Activated CD8-positive, alpha-beta T cell treated with anti-CD3 and anti-CD28 coated beads for 36 hours (primary cell): ENCODE measurements at regions of chr10 and their contacts with region 1.

Region 1: DNA sequence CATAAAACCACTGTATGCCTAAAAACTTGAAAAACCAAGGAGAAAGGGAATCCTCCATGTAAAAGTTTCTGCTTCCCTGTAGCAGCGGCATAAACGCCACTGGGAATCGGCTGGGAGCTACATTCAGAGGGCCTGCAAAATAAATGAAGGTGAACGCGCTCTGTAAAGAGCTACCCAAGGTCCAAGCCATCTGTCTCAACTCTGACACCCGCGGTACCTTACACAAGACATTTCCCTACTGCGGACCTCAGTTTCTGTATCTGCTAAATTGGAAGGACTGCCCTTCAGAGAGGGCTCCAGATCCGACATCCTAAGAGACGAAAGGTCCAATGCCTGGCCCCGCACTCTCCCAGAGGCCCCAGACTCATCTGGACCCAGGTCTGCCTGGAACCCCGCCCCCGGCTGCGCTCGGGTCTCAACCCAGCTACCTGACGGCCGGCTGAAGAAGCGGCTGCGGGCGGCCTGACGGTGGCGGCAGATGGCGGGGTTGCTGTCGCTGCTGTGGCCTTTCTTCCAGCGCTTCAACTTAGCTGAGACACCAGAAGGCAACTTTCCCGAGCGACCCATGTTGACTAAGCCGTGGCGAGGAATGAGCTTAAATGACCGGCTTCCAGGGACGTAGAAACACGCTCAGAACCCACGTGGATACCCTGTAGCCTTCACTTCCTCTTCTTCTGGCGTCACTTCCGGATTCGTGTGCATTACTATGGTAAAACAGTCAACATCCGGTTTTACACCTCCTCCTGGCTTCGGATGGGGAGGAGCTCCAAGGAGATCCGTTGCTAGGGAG is at the start of gene RRP12:
- DNase-seq: peak; percentile 93
- ATAC-seq: peak; percentile 98
- H3K4me3 Mint-ChIP-seq: peak within 1 kb of the TSS; percentile 89
- H3K27ac Mint-ChIP-seq: peak within 1 kb of the TSS; percentile 79
- H3K4me1 Mint-ChIP-seq: peaks cover 5% of the 10 kb centered on the region
- H3K27me3 Mint-ChIP-seq: no peaks in the 10 kb centered on the region
- CTCF ChIP-seq: no peak
- total RNA-seq, gene RRP12: 50.3 to 51.0 TPM

Region 2: DNA sequence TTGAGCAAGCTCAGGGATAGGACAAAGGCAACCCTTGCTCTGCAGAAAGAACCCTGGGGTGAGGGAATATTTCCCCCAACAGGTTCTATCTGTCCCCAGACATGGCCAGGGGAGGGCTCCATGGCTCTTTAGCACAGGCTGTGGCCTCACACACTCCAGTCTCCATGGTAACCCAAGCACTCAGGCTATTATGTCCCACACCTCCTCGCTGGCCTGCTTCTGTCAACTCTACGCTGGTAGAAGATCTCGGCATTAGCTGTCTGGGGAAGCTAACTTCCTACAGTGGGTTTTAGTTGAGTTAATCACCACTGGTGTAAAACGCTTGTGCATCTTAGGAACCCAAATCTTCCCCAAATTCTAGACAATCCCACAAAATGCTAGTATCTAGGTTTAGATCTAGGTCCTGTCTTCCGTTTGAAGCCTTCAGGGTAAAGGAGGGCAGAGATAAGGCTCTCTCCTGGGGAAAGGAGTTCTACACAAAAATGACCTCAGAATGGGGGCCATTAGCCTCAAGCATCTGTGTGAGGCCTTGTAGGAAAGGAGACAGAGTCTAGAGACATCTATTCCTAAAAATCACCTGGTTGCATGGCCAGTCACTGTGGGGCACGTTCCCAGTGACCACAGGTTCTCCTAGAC is 178.4 kb before region 1 on chr10:
- CTCF ChIA-PET with region 1: no interaction called
- POLR2A ChIA-PET with region 1: no interaction called
- intact Hi-C with region 1: no loop called
- DNase-seq: no peak
- ATAC-seq: no peak
- H3K4me3 Mint-ChIP-seq: no peak overlapping the region
- H3K27ac Mint-ChIP-seq: no peak overlapping the region
- H3K4me1 Mint-ChIP-seq: peaks cover 24% of the 10 kb centered on the region
- H3K27me3 Mint-ChIP-seq: no peaks in the 10 kb centered on the region
- CTCF ChIP-seq: no peak

Region 3: GRCh38 chr10:97412891-97413304 is 12.0 kb after region 1 on chr10:
- CTCF ChIA-PET with region 1: interaction called, 43 read pairs
- POLR2A ChIA-PET with region 1: interaction called, 6 read pairs
- intact Hi-C with region 1: no loop called
- DNase-seq: peak; percentile 87
- ATAC-seq: peak; percentile 60
- H3K4me3 Mint-ChIP-seq: peak overlapping the region; percentile 41
- H3K27ac Mint-ChIP-seq: peak overlapping the region; percentile 88
- H3K4me1 Mint-ChIP-seq: peaks cover 47% of the 10 kb centered on the region
- H3K27me3 Mint-ChIP-seq: no peaks in the 10 kb centered on the region
- CTCF ChIP-seq: no peak

Region 4: DNA sequence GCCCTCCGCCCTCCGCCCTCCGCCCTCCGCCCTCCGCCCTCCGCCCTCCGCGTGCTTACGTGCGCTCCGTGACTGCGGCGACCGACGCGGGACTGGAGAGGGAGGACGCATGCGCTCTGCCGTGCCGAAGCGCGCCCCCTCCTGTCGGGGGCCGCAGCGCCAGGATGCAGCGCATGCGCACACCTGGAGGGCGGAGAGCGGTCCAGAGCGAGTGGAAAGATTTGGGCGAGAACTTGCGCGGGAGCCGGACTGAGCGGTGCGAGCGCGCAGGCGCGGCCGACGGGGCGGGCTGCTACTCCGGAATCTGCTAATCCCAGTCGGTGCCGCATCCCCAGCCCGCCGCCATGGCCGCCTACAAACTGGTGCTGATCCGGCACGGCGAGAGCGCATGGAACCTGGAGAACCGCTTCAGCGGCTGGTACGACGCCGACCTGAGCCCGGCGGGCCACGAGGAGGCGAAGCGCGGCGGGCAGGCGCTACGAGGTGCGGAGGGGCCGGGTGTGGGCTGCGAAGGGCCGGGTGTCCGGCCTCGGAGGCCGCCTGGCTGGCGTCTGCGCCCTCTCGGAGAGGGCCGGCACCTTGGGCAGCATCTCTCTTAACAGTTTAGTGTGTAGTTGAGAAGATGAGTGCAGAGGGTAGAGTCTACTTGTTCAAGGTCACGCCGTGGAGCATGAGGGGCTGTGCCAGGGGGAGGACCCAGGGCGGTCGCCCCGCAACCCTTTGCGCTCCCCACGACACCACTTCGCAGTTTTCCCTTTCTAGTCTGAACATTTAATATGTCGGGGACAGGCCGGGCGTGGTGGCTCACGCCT is 25.3 kb after region 1 on chr10 and contains the start of gene PGAM1:
- CTCF ChIA-PET with region 1: interaction called, 108 read pairs
- POLR2A ChIA-PET with region 1: interaction called, 7 read pairs
- intact Hi-C with region 1: loop called (anchors 2 kb)
- DNase-seq: peak; percentile 93
- ATAC-seq: peak; percentile 73
- H3K4me3 Mint-ChIP-seq: peak within 1 kb of the TSS; percentile 96
- H3K27ac Mint-ChIP-seq: peak within 1 kb of the TSS; percentile 99
- H3K4me1 Mint-ChIP-seq: peaks cover 43% of the 10 kb centered on the region
- H3K27me3 Mint-ChIP-seq: peaks cover 2% of the 10 kb centered on the region
- CTCF ChIP-seq: peak; percentile 55
- total RNA-seq, gene PGAM1: 1,193 to 1,205 TPM

Region 5: DNA sequence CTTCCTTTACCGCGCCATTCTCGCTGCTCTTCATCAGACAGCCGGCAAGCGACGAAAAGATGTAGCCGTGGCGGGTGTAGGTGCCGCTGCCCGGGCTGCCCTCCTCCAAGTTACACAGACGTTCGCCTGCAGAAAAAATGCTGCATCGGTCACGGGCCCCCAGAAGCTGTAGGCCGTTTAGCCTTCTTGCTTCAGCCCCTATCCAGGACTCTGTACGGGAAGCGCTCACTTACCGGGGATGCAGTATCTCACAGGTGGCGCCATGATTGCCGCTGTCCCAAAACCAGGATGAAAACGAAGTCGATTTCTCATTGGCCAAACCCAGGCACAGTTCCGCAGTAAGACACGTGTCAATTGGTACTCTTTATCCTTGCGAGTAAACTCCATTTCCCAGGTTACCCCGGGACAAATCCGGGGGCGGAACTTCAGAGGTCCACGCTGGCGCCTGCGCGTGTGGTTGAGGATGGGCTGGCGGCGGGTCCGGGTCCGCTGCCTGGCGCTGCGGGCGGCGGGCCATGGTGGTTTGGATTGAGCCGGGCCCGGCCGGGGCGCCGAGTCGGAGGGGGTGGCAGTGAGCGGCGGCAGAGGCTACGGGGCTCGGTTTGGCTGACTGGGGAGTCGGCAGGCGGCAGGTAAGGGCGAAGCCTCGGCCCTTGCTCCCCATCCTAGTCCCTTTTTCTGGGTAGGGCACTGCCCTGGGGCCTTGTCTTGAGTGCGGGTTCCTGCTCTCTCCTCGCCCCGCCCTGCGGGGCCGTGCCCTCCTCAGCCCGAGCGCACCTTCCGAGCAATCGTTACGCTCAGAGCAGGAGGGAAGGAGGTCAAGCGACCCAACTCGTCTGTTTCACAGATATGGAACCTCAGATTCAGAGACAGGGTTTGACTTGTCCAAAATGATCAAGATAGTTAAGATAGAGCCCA is 45.1 kb after region 1 on chr10 and contains the starts of genes EXOSC1 and ZDHHC16:
- CTCF ChIA-PET with region 1: interaction called, 13 read pairs
- POLR2A ChIA-PET with region 1: interaction called, 6 read pairs
- intact Hi-C with region 1: loop called (anchors 5 kb)
- DNase-seq: peak; percentile 98
- ATAC-seq: peak; percentile 94
- H3K4me3 Mint-ChIP-seq: peak within 1 kb of the TSS; percentile 97
- H3K27ac Mint-ChIP-seq: peak within 1 kb of the TSS; percentile 85
- H3K4me1 Mint-ChIP-seq: peaks cover 42% of the 10 kb centered on the region
- H3K27me3 Mint-ChIP-seq: no peaks in the 10 kb centered on the region
- CTCF ChIP-seq: no peak
- total RNA-seq, gene EXOSC1: 43.3 to 49.2 TPM
- total RNA-seq, gene ZDHHC16: 23.8 to 25.2 TPM

Region 6: DNA sequence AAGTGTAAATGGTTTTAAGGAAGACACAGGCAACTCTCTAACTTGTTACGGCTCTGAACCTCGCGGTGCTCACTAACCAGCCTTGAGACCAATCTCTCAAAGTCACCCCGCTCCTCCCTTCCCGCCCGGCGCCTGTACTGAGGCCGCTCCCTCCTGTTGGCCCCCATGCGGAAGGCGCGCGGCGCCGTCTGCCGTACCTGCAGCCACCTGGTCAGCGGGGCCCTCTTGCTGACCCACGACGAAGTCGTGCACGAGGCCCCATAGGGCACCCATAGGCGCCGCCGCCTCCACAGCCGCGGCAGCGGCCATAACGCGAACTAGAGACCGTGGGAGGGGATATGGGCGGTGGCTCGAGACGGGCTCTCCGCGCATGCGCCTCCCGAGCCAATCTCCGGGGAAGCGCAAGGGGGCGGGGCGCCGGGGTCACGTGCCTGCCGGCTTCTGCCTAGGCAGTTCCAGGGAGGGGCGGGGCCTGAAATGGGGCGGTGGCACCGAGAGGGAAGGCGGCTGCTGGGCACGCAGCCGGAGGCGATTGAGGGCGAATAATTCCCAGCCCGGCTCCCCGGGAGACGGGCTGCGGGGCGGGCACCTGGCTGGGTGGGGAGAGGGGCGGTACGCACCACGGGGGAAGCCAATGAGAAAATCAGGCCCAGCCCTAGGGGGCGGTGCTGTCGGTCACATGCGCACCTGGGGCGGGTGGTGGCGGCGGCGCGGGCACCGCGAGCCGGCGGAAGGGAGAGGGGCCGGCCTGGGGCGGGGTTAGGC is 97.4 kb after region 1 on chr10 and contains the start of gene MMS19:
- CTCF ChIA-PET with region 1: no interaction called
- POLR2A ChIA-PET with region 1: no interaction called
- intact Hi-C with region 1: loop called (anchors 10 kb)
- DNase-seq: peak; percentile 99
- ATAC-seq: peak; percentile 92
- H3K4me3 Mint-ChIP-seq: peak within 1 kb of the TSS; percentile 89
- H3K27ac Mint-ChIP-seq: peak within 1 kb of the TSS; percentile 98
- H3K4me1 Mint-ChIP-seq: peaks cover 33% of the 10 kb centered on the region
- H3K27me3 Mint-ChIP-seq: peaks cover 30% of the 10 kb centered on the region
- CTCF ChIP-seq: no peak
- total RNA-seq, gene MMS19: 107 to 108 TPM

Region 7: DNA sequence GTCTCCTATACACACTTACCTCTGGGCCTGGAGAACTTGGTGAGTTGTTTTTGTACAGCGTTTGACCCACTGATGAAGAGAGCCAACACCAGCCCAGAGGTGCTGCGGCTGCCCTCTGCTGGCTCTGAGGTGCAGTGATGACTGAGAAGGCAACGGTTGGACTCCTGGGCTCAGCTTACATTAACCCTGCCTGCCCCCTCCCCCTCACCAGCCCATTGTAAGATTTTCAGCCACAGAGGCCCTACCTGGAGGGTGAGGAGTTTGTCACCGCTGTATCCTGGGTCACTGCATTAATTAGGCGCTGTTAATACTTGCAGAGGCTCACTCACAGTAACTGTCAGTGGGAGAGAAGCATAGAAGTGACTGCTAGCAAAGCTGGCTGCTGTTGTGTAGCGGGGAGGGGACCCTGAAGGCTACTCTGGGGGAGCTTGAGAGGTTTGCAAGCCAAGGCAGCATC is 152.7 kb after region 1 on chr10:
- CTCF ChIA-PET with region 1: interaction called, 13 read pairs
- POLR2A ChIA-PET with region 1: no interaction called
- intact Hi-C with region 1: no loop called
- DNase-seq: peak; percentile 76
- ATAC-seq: peak; percentile 99
- H3K4me3 Mint-ChIP-seq: no peak overlapping the region
- H3K27ac Mint-ChIP-seq: no peak overlapping the region
- H3K4me1 Mint-ChIP-seq: no peaks in the 10 kb centered on the region
- H3K27me3 Mint-ChIP-seq: no peaks in the 10 kb centered on the region
- CTCF ChIP-seq: peak; percentile 74